Esophagus squamous epithelium (tissue), 5 donors: ENCODE measurements at regions of chr5 and their contacts with region 1.

Region 1: DNA sequence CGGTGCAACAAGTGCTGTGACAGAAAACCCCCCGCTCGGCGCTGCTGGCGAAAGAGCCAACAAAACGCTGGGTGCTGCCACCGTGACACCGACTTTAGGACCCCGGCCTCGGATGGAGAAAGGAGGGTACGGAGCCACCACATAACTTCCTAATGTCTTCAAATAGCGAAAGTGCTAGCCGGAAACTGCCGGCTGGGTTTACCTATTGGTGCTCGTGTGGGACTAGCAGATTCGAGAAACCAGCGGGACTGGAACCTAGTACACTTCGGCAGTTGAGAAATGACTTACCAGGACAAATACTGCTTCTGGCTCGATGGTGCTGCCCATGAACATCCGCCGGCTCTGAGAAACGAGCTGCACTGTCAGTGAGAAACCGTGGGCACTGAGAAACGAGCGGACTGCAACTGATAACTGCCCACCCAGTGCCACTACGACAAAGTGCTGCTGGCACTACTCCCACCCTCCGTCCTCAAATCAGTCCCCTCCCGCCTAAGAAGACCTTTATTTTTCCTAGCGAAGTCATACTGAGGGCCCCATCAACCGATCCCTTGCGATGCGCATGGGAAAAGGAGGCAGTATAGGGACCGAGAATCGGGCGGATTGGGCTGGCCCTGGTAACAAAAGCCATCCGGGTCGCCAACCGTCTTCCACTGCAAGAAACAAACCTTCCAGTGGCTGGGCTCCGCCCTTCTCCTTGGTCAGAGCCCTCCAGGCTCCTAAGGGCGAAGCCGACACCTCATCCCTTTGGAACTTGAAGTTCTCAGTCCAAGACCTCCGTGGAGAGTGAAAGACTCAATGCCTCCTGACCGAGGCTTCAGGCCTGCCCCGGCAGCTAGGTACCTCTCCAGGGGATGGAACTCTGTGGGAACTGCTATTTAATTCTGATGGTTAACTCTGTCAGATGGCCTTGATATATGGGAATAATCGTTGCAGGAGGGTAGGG is 27.0 kb upstream of the ANXA2R start:
- DNase-seq: peak; percentile 71
- H3K4me3 ChIP-seq: peak overlapping the region; percentile 64 to 84 (median 81)
- H3K27ac ChIP-seq: peak overlapping the region; percentile 97 to 99 (median 99)
- H3K4me1 ChIP-seq: peaks cover 11 to 45% (median 19%) of the 10 kb centered on the region in 3 donors
- H3K27me3 ChIP-seq: no peaks in the 10 kb centered on the region
- CTCF ChIP-seq: peak in 2 of 6 experiments; percentile 5 to 7
- POLR2A ChIP-seq: peak in 3 of 4 donors; percentile 16 to 77 (median 54)

Region 2: GRCh38 chr5:42994246-42995151 is 72.6 kb before region 1 on chr5:
- intact Hi-C with region 1: no loop called
- DNase-seq: peak; percentile 49
- H3K4me3 ChIP-seq: peak overlapping the region; percentile 16 to 73 (median 60)
- H3K27ac ChIP-seq: peak overlapping the region; percentile 68 to 97 (median 90)
- H3K4me1 ChIP-seq: peaks cover 0 to 53% (median 4%) of the 10 kb centered on the region in 3 donors
- H3K27me3 ChIP-seq: peaks cover 0 to 100% (median 24%) of the 10 kb centered on the region in 4 donors
- CTCF ChIP-seq: peak; percentile 82 to 93 (median 86)
- POLR2A ChIP-seq: peak in 1 of 4 donors; percentile 18

Region 3: GRCh38 chr5:43120720-43121564 is 53.9 kb after region 1 on chr5 and contains the start of gene ZNF131:
- intact Hi-C with region 1: loop called (anchors 5 kb)
- DNase-seq: peak; percentile 87
- H3K4me3 ChIP-seq: peak within 1 kb of the TSS; percentile 70 to 98 (median 92)
- H3K27ac ChIP-seq: peak within 1 kb of the TSS; percentile 94 to 99 (median 99)
- H3K4me1 ChIP-seq: peaks cover 0 to 41% (median 23%) of the 10 kb centered on the region in 3 donors
- H3K27me3 ChIP-seq: no peaks in the 10 kb centered on the region
- CTCF ChIP-seq: peak in 1 of 6 experiments; percentile 7
- POLR2A ChIP-seq: peak in 1 of 4 donors; percentile 78
- total RNA-seq, gene ZNF131: 20.7 to 48.1 (median 35.6) TPM

Region 4: GRCh38 chr5:43156388-43156787 is 89.3 kb after region 1 on chr5:
- intact Hi-C with region 1: no loop called
- DNase-seq: no peak
- H3K4me3 ChIP-seq: no peak overlapping the region
- H3K27ac ChIP-seq: no peak overlapping the region
- H3K4me1 ChIP-seq: peaks cover 0 to 6% (median 0%) of the 10 kb centered on the region in 3 donors
- H3K27me3 ChIP-seq: no peaks in the 10 kb centered on the region
- CTCF ChIP-seq: no peak
- POLR2A ChIP-seq: no peak